H1 (cell line): ENCODE measurements at regions of chr11 and their contacts with region 1.

Region 1: DNA sequence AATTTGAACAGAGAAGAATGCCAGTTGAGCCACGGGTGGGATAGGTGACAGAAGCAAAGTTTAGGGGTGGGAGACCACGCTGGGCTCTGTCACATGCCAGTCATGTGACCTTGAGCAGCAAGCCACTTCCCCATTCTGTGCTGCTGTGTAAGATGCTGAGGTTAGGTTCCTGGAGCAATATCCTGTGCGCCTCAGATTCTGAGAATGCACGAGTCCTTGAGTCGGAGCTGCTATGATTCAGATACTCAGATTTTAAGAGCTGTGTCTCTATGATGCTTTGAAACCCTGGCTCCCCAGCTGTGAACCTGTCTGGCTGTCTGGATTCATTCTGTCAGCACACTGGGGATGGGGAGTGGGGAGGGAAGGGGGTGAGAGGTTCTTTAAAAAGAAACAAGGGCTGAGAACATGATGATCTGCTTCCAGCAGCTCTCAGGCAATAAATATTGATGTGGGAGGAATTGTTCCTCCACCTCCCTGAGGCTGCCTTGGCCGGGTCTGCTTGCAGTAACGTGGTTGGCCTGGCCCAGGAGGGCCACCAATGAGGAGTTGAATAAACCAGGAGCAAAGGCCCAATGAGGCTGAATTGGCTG is 24.0 kb downstream of the SLCO2B1 start:
- DNase-seq: no peak
- H3K4me3 ChIP-seq: no peak overlapping the region
- H3K27ac ChIP-seq: no peak overlapping the region
- H3K4me1 ChIP-seq: no peaks in the 10 kb centered on the region; a peak in 1 of 7 replicates
- H3K27me3 ChIP-seq: no peaks in the 10 kb centered on the region
- CTCF ChIP-seq: no peak
- EP300 ChIP-seq: no peak
- POLR2A ChIP-seq: no peak
- RAD21 ChIP-seq: no peak

Region 2: GRCh38 chr11:75160192-75160757 is 14.6 kb before region 1 on chr11:
- CTCF ChIA-PET with region 1: interaction called, 10 read pairs
- POLR2A ChIA-PET with region 1: no interaction called
- DNase-seq: no peak
- H3K4me3 ChIP-seq: no peak overlapping the region
- H3K27ac ChIP-seq: no peak overlapping the region
- H3K4me1 ChIP-seq: no peaks in the 10 kb centered on the region; a peak in 1 of 7 replicates
- H3K27me3 ChIP-seq: no peaks in the 10 kb centered on the region
- CTCF ChIP-seq: no peak
- EP300 ChIP-seq: no peak
- POLR2A ChIP-seq: no peak
- RAD21 ChIP-seq: no peak

Region 3: DNA sequence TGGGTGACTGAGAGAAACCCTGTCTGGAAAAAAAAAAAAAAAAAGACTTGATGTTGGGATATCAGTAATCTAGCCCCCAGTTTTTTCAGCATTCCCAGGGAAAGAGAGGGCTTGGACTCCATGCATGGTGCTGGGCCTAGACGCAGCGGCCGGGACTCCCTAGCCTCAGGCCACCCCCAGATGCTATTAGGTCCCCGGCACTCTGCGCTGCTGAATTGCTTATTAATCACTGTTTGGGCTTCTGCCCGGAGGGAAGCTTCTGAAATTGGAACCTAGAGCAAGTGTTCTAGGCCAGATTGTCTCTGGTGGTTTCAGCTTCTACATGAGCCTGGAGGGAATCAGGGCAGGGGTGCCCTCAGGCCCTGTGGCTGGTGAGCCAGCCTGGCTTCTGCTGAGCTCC is 15.1 kb after region 1 on chr11:
- CTCF ChIA-PET with region 1: no interaction called
- POLR2A ChIA-PET with region 1: no interaction called
- DNase-seq: no peak
- H3K4me3 ChIP-seq: no peak overlapping the region
- H3K27ac ChIP-seq: no peak overlapping the region
- H3K4me1 ChIP-seq: peaks cover 0 to 6% (median 3%) of the 10 kb centered on the region in 4 experiments; a peak in 3 of 7 replicates
- H3K27me3 ChIP-seq: no peaks in the 10 kb centered on the region; a peak in 1 of 7 replicates
- CTCF ChIP-seq: no peak
- EP300 ChIP-seq: no peak
- POLR2A ChIP-seq: no peak
- RAD21 ChIP-seq: no peak